ENCODE measurements at regions of chr2 and their contacts with region 1.

Region 1: DNA sequence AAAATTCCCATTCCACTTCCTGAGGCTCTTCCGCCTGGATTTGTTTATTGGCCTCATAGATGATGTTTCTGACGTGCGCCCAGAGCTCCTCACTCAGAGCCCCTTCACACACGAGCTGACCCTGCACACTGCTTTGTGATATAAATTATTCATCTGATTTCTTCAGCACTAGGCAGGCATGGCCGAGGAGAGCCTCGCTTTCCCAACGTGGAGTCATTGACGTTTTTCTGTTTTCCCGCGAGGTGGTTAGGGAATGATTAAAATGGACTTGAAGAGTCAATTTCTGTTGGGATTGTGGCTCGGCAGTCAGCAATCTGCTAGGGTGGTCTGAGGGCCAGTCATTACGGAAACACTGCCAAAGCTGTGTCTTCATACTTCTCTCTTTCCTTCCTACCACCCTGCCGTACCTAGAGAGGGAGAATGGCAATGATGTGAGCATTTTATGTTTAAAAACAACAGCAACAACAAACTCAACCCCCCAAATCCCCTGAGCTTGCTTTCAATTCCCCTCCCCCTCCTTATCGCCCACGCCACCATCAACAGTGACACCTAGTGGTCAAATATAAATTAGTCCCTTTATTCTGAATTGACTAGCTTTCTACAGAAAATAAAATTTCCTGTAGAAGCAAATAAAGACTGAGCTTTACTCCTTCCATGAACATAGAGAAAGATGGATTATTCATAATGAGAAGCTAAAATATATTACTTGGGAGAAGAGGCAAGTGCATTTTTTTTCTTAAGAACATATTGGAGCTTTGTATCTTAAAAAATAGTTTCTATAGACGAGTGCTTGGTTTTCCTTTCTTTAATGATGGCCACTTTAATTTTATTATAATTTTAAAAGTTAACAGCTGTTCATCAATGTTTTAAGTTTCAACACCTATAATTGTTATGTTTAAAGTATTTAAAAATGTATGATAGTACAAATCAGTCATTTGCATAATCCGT is 285.1 kb downstream of the MTX2 start:
- DNase-seq: peak; percentile 34
- H3K4me3 ChIP-seq: peak overlapping the region; percentile 59
- H3K27ac ChIP-seq: no peak overlapping the region
- H3K27me3 ChIP-seq: no peaks in the 10 kb centered on the region
- CTCF ChIP-seq: peak; percentile 78

Region 2: GRCh38 chr2:176140513-176141317 is 413.7 kb before region 1 on chr2:
- CTCF ChIA-PET with region 1: interaction called, 55 read pairs
- POLR2A ChIA-PET with region 1: no interaction called
- DNase-seq: peak; percentile 4
- H3K4me3 ChIP-seq: peak overlapping the region; percentile 58
- H3K27ac ChIP-seq: no peak overlapping the region
- H3K27me3 ChIP-seq: peaks cover 78% of the 10 kb centered on the region
- CTCF ChIP-seq: peak; percentile 73

Region 3: DNA sequence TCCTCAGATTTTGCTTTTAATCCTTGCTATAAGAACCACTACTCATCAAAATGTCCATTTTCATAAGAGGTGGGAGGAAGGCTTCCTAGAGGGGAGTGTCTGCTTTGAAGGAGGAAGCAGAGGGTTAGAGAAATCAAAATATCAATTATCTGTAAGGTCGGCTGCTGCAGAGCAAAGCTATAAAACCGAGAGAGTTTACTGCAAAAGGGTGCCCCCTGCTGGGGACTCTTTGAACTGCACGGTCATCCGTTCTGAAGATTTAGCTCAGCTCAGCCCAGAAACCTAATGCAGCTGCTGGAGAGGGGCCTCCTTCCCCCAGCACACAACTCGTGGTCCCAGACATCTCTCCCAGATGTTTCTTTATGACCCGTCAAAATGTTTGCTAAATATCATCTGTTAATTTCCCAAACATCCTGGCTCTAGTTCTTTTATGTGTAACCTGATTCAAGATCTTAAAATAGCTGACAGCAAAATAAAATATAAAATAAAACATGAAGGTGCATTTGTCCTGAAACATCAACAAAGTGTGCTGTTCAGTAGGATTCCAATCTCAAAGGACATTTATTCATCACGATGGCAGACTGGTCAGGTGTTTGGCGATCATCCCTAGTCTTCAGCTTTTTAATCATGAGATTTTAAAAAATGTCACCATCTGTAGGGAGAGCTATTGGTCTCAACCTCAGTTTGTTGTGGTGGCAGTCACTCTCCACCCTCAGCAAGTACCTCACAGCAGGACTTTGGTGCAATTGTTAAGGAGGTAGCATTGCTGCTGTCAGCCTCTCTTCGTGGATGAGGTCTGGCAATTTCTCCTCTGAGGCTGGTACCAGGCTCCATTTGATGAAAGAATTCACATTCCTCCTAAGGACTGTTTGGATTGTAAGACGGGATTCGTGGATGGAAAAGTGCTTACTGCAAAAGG is 99.2 kb before region 1 on chr2:
- CTCF ChIA-PET with region 1: interaction called, 50 read pairs
- POLR2A ChIA-PET with region 1: no interaction called
- DNase-seq: peak; percentile 45
- H3K4me3 ChIP-seq: no peak overlapping the region
- H3K27ac ChIP-seq: no peak overlapping the region
- H3K27me3 ChIP-seq: no peaks in the 10 kb centered on the region
- CTCF ChIP-seq: peak; percentile 92

Region 4: DNA sequence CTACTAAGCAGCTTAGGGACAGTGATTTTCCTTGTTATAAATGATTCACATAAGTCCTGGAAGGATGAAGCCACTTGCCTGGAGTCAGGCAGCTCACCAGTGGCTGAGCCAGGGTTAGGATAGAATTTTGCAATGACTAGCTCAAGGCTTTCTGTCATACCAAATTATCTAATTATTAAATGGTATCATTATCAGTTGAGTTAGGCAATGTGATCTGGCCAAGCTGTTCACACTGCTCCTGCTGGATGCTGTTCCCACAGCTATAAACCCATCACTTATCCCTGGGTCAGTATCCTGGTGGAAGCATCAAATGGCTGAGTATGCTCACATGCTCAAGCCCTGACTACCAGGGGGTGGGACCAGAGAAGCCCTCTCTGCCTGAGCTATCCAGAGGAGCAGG is 49.9 kb before region 1 on chr2:
- CTCF ChIA-PET with region 1: interaction called, 11 read pairs
- POLR2A ChIA-PET with region 1: interaction called, 7 read pairs
- DNase-seq: no peak
- H3K4me3 ChIP-seq: no peak overlapping the region
- H3K27ac ChIP-seq: no peak overlapping the region
- H3K27me3 ChIP-seq: peaks cover 4% of the 10 kb centered on the region
- CTCF ChIP-seq: no peak

Region 5: DNA sequence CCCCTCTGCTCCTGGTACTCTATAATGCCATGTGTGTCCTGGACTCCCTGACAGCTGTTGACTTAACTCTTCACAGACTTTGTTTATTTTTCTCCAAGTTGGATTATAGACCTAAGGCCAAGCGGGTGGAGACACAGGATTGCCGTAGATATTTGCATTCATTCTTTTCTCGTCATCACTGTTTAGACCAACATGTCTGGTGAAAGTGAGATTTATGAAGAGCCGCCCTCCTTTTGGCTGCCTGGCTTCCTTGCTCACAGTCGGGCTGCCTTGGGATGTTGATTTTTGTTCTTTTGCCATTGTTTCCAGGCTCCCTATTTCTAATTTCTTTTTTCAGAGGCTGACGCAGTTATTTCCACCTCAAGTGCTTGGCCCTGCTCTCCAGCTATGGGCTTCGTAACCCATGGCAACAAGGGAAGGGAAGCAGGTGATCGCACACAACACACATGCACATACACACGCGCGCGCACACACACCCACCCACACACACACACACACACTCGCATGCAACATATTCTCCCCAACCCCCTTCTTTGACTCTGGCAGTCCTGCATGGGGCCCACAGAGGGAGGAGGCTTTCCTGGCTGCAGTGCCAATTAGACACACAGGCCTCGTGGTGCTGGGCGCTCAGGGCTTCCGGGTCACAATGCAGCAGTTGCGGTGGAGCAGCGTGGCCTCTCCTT is 11.4 kb after region 1 on chr2:
- CTCF ChIA-PET with region 1: interaction called, 87 read pairs
- POLR2A ChIA-PET with region 1: no interaction called
- DNase-seq: no peak
- H3K4me3 ChIP-seq: no peak overlapping the region
- H3K27ac ChIP-seq: peak overlapping the region; percentile 39
- H3K27me3 ChIP-seq: no peaks in the 10 kb centered on the region
- CTCF ChIP-seq: no peak

Region 6: GRCh38 chr2:176589825-176590440 is 35.6 kb after region 1 on chr2:
- CTCF ChIA-PET with region 1: interaction called, 19 read pairs
- POLR2A ChIA-PET with region 1: no interaction called
- DNase-seq: no peak
- H3K4me3 ChIP-seq: no peak overlapping the region
- H3K27ac ChIP-seq: no peak overlapping the region
- H3K27me3 ChIP-seq: peaks cover 3% of the 10 kb centered on the region
- CTCF ChIP-seq: no peak

Region 7: DNA sequence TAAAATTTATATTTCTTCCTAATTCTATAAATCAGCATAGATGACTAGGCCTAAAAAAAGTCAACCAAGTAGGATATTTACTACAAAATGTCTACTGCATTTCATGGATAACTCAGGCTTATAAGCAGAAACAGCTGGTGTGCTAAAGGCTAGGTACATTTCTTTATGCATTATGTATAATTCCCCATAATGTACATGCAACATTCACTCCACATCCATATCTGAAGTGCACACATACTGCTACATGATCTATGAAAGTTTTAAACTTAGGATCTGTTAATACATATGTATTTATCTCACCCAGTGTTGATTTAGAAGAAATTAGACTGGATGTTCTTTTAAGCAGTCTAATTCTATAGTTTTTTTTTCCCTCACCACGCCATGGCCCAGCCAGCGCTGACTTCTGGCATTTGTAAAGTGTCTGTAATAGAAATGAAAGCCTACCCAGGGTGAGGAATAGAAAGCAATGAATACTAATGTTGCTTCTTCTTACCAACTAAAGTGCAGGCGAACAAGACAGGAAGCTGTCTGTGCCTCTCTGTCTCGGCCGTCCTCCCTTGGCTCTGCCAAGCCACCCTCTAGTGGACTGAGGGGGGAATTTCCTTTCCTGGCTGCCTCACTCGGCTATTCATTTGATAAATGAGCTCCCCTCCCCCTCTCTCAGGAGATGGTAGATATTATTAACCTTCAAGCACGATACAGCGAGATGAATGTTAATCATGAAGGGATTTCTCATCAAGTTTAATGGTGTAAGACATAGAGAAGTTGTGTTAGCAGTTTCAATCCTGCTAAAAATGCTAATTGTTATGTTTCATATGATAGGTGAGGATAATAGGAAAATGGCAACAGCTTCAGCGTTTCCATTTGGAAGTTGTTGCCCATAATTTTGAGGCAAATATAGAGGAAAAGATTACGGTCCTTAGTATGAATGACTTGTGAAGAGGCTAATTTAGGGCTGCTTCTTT is 99.4 kb after region 1 on chr2:
- CTCF ChIA-PET with region 1: interaction called, 18 read pairs
- POLR2A ChIA-PET with region 1: no interaction called
- DNase-seq: peak; percentile 4
- H3K4me3 ChIP-seq: no peak overlapping the region
- H3K27ac ChIP-seq: no peak overlapping the region
- H3K27me3 ChIP-seq: peaks cover 4% of the 10 kb centered on the region
- CTCF ChIP-seq: peak; percentile 75

Region 8: GRCh38 chr2:176821345-176821744 is 267.0 kb after region 1 on chr2:
- CTCF ChIA-PET with region 1: no interaction called
- POLR2A ChIA-PET with region 1: no interaction called
- DNase-seq: no peak
- H3K4me3 ChIP-seq: no peak overlapping the region
- H3K27ac ChIP-seq: no peak overlapping the region
- H3K27me3 ChIP-seq: peaks cover 3% of the 10 kb centered on the region
- CTCF ChIP-seq: no peak